ENCODE measurements at regions of chr9 and their contacts with region 1.

Region 1: GRCh38 chr9:113340017-113340699 is at the start of gene WDR31:
- H3K4me3 Mint-ChIP-seq: peak within 1 kb of the TSS; percentile 91
- H3K27ac Mint-ChIP-seq: peak within 1 kb of the TSS; percentile 68
- H3K4me1 Mint-ChIP-seq: peaks cover 26% of the 10 kb centered on the region
- H3K27me3 Mint-ChIP-seq: no peaks in the 10 kb centered on the region

Region 2: DNA sequence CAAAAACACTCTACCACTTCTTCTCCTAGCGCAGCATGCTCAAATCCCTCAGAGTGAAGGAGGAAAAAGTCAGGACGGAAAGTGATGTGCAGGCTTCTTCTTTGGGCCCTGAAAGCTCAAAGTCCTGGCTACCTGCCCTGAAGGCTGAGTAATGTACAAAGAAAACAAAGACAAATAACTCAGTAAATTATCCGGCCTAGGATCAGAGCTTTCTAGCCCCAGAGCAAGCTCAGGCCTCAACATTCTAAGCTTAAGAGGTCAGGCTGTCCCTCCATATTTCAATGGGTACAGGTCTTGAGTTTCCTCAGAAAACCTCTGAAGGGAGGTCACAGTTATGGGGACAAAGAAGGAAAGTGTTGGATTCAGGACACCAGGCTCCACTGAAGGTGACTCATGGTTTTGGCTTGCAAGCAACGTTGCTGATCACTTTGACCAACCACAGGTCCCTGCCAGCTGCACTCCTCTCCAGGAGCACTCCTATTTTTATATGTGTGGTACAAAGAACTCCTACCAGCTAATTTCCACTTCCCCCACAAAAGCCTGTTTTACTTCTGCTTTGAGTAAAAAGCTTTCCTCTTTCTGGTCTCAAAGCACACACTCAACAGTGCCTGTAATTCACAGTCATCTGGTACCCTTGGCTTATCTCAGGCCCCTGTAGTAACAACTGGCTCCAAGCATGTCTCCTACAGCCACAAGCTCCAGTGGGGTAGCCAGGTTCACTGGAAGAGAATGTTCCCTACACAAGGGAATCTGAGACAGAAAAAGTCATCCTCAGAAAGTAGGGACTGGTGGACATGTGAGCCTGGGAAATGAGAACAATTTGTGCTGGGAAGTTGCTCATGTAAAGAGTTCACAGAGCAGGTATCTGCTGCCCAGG is 1327.9 kb before region 1 on chr9:
- intact Hi-C with region 1: no loop called
- H3K4me3 Mint-ChIP-seq: no peak overlapping the region
- H3K27ac Mint-ChIP-seq: peak overlapping the region; percentile 87
- H3K4me1 Mint-ChIP-seq: peaks cover 68% of the 10 kb centered on the region
- H3K27me3 Mint-ChIP-seq: no peaks in the 10 kb centered on the region

Region 3: DNA sequence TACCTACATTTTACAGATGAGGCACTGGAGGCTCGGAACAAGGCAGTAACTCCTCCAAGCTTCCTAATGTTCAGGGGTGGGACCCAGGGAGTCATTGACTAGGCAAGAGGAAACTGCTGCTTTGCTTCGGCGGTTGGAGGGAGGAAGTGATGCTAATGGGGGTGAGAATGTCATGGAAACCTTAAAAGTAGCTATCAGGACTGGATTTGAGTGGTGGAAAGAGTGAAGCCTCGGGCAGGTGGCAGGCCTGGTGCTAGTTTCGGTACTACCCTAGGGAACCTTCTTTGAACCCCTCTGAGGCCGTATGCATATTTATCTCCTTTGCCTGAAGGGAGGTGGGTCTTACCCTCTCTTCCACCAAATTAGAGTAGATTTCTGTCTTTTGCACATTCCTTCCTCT is 10.8 kb after region 1 on chr9:
- intact Hi-C with region 1: loop called (anchors 1 kb)
- H3K4me3 Mint-ChIP-seq: no peak overlapping the region
- H3K27ac Mint-ChIP-seq: peak overlapping the region; percentile 61
- H3K4me1 Mint-ChIP-seq: peaks cover 20% of the 10 kb centered on the region
- H3K27me3 Mint-ChIP-seq: peaks cover 21% of the 10 kb centered on the region

Region 4: GRCh38 chr9:113401027-113401792 is 61.1 kb after region 1 on chr9 and contains the start of gene ALAD:
- intact Hi-C with region 1: loop called (anchors 10 kb)
- H3K4me3 Mint-ChIP-seq: peak within 1 kb of the TSS; percentile 98
- H3K27ac Mint-ChIP-seq: peak within 1 kb of the TSS; percentile 96
- H3K4me1 Mint-ChIP-seq: peaks cover 68% of the 10 kb centered on the region
- H3K27me3 Mint-ChIP-seq: no peaks in the 10 kb centered on the region